CD8-positive, alpha-beta T cell (primary cell): ENCODE measurements at regions of chr6 and their contacts with region 1.

Region 1: GRCh38 chr6:111210194-111210728 is 123.0 kb downstream of the SLC16A10 start:
- DNase-seq: peak in 4 of 9 experiments; percentile 29 to 73 (median 58)
- ATAC-seq: peak; percentile 83
- H3K4me3 ChIP-seq: no peak overlapping the region
- H3K4me3 Mint-ChIP-seq: no peak overlapping the region
- H3K27ac ChIP-seq: no peak overlapping the region
- H3K27ac Mint-ChIP-seq: peak overlapping the region; percentile 10
- H3K4me1 ChIP-seq: no peaks in the 10 kb centered on the region
- H3K4me1 Mint-ChIP-seq: peaks cover 5% of the 10 kb centered on the region
- H3K27me3 ChIP-seq: no peaks in the 10 kb centered on the region
- H3K27me3 Mint-ChIP-seq: no peaks in the 10 kb centered on the region
- CTCF ChIP-seq: peak; percentile 77

Region 2: DNA sequence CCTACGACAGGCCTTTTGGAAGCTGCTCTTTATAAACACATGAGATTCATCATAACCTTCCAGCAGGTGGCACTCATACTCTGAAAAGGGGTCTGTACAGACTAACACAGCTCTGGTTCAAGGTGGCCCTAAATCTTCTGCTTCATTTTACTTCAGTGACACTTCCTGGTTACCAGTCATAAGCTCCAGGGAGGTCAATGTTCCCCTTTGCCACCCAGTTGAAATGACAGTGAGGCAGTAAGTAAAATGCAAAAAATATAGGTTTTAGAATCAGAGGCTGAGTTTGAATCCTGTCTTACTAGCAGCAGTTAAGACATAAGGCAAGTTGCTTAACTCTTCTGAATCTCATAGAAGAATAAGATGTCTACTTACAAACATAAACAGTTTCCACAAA is 527.8 kb before region 1 on chr6:
- CTCF ChIA-PET with region 1: no interaction called
- POLR2A ChIA-PET with region 1: no interaction called
- intact Hi-C with region 1: loop called in 1 of 2 experiments (anchors 10 kb)
- DNase-seq: peak; percentile 18 to 89 (median 63)
- ATAC-seq: peak; percentile 99
- H3K4me3 ChIP-seq: no peak overlapping the region
- H3K4me3 Mint-ChIP-seq: no peak overlapping the region
- H3K27ac ChIP-seq: no peak overlapping the region
- H3K27ac Mint-ChIP-seq: peak overlapping the region; percentile 20
- H3K4me1 ChIP-seq: peaks cover 8% of the 10 kb centered on the region
- H3K4me1 Mint-ChIP-seq: peaks cover 16% of the 10 kb centered on the region
- H3K27me3 ChIP-seq: no peaks in the 10 kb centered on the region
- H3K27me3 Mint-ChIP-seq: no peaks in the 10 kb centered on the region
- CTCF ChIP-seq: peak; percentile 67

Region 3: GRCh38 chr6:110958329-110959192 is 251.7 kb before region 1 on chr6 and contains the start of gene GTF3C6:
- CTCF ChIA-PET with region 1: no interaction called
- POLR2A ChIA-PET with region 1: no interaction called
- intact Hi-C with region 1: no loop called
- DNase-seq: peak; percentile 81 to 95 (median 93)
- ATAC-seq: peak; percentile 99
- H3K4me3 ChIP-seq: peak within 1 kb of the TSS; percentile 97 to 99
- H3K4me3 Mint-ChIP-seq: peak within 1 kb of the TSS; percentile 100
- H3K27ac ChIP-seq: peak within 1 kb of the TSS; percentile 91 to 92
- H3K27ac Mint-ChIP-seq: peak within 1 kb of the TSS; percentile 100
- H3K4me1 ChIP-seq: peaks cover 5% of the 10 kb centered on the region
- H3K4me1 Mint-ChIP-seq: peaks cover 21% of the 10 kb centered on the region
- H3K27me3 ChIP-seq: no peaks in the 10 kb centered on the region
- H3K27me3 Mint-ChIP-seq: peaks cover 5% of the 10 kb centered on the region
- CTCF ChIP-seq: no peak
- total RNA-seq, gene GTF3C6: 25.0 to 26.3 TPM

Region 4: GRCh38 chr6:111033628-111034289 is 176.5 kb before region 1 on chr6:
- CTCF ChIA-PET with region 1: interaction called, 10 read pairs
- POLR2A ChIA-PET with region 1: no interaction called
- intact Hi-C with region 1: no loop called
- DNase-seq: no peak
- ATAC-seq: no peak
- H3K4me3 ChIP-seq: no peak overlapping the region
- H3K4me3 Mint-ChIP-seq: no peak overlapping the region
- H3K27ac ChIP-seq: no peak overlapping the region
- H3K27ac Mint-ChIP-seq: no peak overlapping the region
- H3K4me1 ChIP-seq: no peaks in the 10 kb centered on the region
- H3K4me1 Mint-ChIP-seq: no peaks in the 10 kb centered on the region
- H3K27me3 ChIP-seq: no peaks in the 10 kb centered on the region
- H3K27me3 Mint-ChIP-seq: peaks cover 3% of the 10 kb centered on the region
- CTCF ChIP-seq: no peak

Region 5: DNA sequence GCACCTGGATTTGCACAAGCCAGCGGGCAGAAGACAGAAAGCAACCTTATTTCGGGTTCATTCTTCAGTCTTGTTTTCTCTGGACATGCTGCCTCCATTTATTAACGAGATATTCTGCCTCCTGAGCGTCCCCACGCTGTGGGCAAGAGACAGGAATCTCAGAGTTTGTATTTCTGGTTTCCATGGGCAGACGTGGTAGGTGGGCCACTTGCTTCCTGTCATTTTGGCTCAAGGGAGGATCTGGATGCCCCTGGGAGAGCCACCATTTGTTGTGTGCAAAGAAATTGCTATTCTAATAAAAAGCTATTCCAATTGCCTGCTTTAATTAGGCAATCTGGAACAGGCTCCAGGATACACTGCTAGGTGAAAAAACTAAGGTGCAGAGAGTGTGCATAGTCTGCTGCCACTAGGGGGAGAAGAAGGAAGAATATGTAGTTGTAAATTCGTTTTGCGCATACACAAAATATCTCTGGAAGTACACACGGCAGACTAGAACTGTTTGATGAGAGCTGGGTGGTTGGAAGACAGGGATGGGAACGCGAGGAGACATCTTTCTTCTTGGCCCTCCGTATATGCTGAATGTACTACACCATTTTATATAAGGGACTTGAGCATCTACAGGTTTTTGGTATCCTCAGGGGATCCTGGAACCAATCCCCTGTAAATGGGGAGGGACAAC is 153.0 kb before region 1 on chr6:
- CTCF ChIA-PET with region 1: interaction called, 118 read pairs
- POLR2A ChIA-PET with region 1: interaction called, 4 read pairs
- intact Hi-C with region 1: loop called (anchors 1 kb)
- DNase-seq: peak in 2 of 9 experiments; percentile 49 to 64
- ATAC-seq: peak; percentile 65
- H3K4me3 ChIP-seq: no peak overlapping the region
- H3K4me3 Mint-ChIP-seq: no peak overlapping the region
- H3K27ac ChIP-seq: no peak overlapping the region
- H3K27ac Mint-ChIP-seq: no peak overlapping the region
- H3K4me1 ChIP-seq: no peaks in the 10 kb centered on the region
- H3K4me1 Mint-ChIP-seq: peaks cover 2% of the 10 kb centered on the region
- H3K27me3 ChIP-seq: no peaks in the 10 kb centered on the region
- H3K27me3 Mint-ChIP-seq: no peaks in the 10 kb centered on the region
- CTCF ChIP-seq: peak; percentile 61

Region 6: DNA sequence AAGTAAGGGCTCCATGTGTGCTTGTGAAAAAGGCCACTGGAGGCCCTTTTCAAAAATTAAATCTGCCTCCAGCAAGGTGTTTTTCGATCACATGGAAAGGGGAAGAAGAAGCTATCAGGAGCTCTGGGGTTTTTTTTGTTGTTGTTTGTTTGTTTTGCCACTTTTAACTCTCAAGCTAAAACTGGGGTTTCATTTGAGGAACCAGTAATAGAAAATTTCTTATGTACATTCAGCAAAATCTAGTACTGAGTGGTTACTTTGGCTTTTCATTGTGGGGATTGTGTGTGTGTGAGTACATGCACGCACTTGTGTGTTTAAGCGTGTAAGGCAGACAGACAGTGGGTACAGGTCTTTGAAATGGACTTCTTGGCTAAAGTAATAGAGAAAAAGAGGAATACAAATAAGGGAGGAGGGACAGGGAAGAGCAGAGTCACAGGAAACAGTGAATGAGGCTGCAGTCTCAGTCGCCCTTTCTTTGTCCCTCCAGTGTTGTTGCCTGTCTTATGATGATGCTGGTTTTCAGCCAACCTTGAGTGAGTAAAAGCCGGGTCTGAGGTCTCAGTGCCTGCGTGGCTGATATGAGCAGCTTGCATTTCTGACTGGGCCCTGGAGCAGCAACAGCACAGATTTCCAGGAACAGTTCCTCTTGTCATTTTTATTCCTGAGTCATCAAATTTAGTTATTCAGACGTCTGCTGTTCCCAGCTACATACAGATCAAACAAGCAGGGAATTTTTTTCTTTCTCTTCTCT is 96.8 kb before region 1 on chr6:
- CTCF ChIA-PET with region 1: interaction called, 3 read pairs
- POLR2A ChIA-PET with region 1: no interaction called
- intact Hi-C with region 1: loop called in 1 of 2 experiments (anchors 1 kb)
- DNase-seq: peak in 4 of 9 experiments; percentile 20 to 47 (median 28)
- ATAC-seq: peak; percentile 53
- H3K4me3 ChIP-seq: peak overlapping the region in 1 of 2 experiments; percentile 1
- H3K4me3 Mint-ChIP-seq: peak overlapping the region; percentile 59
- H3K27ac ChIP-seq: peak overlapping the region; percentile 31 to 65
- H3K27ac Mint-ChIP-seq: peak overlapping the region; percentile 93
- H3K4me1 ChIP-seq: peaks cover 33% of the 10 kb centered on the region
- H3K4me1 Mint-ChIP-seq: peaks cover 49% of the 10 kb centered on the region
- H3K27me3 ChIP-seq: no peaks in the 10 kb centered on the region
- H3K27me3 Mint-ChIP-seq: no peaks in the 10 kb centered on the region
- CTCF ChIP-seq: no peak